Activated T-helper 1 cell treated with anti-CD3 and anti-CD28 coated beads, Interleukin-12 subunit alpha, Interleukin-12 subunit beta, Interleukin-2, Interleukin-4 antibody, amounts not matched to agents 30 ng/mL and 10 ng/mL and 1 ng/mL, durations not matched to agents 14 hours and 24 hours and 36 hours (primary cell): ENCODE measurements at regions of chr9 and their contacts with region 1.

Region 1: DNA sequence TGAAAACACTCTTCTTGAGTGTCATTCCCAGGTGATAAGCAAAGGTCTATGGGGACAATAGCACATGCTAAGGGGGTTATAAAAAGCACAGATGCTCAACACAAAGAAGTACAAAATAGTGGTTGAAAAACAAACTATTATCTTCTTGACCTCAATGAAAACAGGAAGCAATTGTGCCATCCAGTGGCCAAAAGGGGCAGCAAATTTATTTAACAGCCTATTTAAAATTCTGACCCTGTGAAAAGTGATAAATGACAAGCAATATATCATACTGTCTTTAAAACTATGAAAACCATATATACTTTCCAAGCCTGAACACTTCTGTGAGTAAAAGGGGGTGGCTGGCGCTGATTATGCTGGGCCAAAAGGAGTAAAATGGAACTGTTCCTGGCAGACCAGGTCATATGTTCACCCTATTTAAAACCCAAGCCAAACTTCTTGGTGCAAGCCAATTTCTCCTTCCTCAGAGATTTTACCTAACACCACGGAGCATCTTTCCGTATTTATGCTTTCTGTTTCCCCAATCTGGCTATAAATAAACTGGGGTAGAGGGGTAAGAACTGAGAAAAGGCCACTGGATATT is 29.7 kb downstream of the TEX10 start:
- DNase-seq: no peak
- H3K4me3 Mint-ChIP-seq: no peak overlapping the region
- H3K27ac Mint-ChIP-seq: no peak overlapping the region
- H3K4me1 Mint-ChIP-seq: peaks cover 5% of the 10 kb centered on the region
- H3K27me3 Mint-ChIP-seq: no peaks in the 10 kb centered on the region

Region 2: DNA sequence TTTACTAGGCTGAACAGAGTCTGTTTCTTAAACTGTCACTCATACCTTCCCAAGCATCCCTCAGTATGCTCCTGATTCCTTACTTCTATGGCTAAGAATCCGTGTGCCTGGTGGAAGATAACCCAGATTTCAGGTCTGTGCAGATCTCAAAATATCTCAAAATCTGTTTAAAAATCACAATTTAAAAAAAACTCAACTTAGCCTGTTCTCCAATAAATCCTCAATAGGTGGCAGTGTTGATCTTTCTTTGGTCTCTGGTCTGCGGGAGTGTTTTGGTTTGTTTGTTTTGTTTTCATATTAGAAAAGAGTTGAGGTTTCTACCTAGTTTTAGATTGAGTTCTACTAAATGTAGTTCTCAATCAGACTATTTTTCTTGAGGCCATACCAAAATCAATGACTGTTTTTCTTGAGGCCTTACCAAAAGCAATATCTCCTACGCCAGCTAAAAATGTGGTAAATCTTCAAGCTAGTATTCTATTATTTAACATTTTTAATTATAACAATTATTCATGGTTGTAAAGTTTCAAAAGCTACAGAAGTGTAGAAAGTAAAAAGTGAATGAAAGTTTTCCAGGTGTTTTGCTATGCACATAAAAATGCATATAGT is 1160.2 kb before region 1 on chr9:
- intact Hi-C with region 1: loop called (anchors 1 kb)
- DNase-seq: no peak
- H3K4me3 Mint-ChIP-seq: no peak overlapping the region
- H3K27ac Mint-ChIP-seq: no peak overlapping the region
- H3K4me1 Mint-ChIP-seq: peaks cover 25% of the 10 kb centered on the region
- H3K27me3 Mint-ChIP-seq: peaks cover 9% of the 10 kb centered on the region

Region 3: GRCh38 chr9:100066539-100066938 is 256.5 kb before region 1 on chr9:
- intact Hi-C with region 1: no loop called
- DNase-seq: no peak
- H3K4me3 Mint-ChIP-seq: no peak overlapping the region
- H3K27ac Mint-ChIP-seq: no peak overlapping the region
- H3K4me1 Mint-ChIP-seq: peaks cover 6% of the 10 kb centered on the region
- H3K27me3 Mint-ChIP-seq: no peaks in the 10 kb centered on the region